ENCODE measurements at regions of chr4 and their contacts with region 1.

Region 1: GRCh38 chr4:163484906-163485305 is 9.6 kb upstream of the TMA16 start:
- DNase-seq: peak in 1 of 2 donors; percentile 80
- ATAC-seq: peak; percentile 55 to 65 (median 62)
- H3K4me3 ChIP-seq: no peak overlapping the region
- H3K4me3 Mint-ChIP-seq: no peak overlapping the region
- H3K27ac ChIP-seq: no peak overlapping the region
- H3K27ac Mint-ChIP-seq: no peak overlapping the region
- H3K4me1 ChIP-seq: no peaks in the 10 kb centered on the region
- H3K4me1 Mint-ChIP-seq: no peaks in the 10 kb centered on the region
- H3K27me3 ChIP-seq: no peaks in the 10 kb centered on the region
- H3K27me3 Mint-ChIP-seq: peaks cover 0 to 3% of the 10 kb centered on the region in 2 donors
- CTCF ChIP-seq: peak; percentile 70

Region 2: DNA sequence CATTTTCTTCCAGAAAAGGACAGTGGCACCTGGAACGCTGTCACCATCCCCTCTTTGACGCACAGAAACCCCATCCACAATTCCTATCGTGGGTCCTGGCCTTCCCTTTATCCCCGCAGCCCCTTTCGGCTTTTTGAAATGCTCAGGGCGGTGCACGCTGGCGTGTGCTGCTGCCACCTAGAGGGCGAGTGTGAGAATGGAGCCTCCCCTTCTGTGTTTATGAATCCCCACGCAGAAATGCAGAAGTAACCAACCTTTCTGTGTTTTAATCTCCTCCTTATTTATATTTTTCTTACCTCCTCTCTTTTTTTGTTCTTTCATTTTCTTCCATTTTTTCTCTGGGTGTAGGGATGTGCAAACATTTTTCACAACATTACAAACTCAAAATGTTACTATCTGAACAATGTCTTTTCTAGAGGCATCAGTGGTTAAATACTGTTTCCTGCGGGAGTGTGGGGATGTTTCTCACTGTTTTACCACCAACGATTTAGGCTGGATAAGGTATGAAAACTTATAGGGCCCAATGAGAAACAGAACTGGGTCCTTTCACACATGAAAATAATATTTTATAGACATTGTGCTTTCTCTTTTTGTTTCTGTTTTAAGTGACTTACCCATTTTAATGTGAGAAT is 59.6 kb after region 1 on chr4:
- intact Hi-C with region 1: loop called (anchors 1 kb)
- DNase-seq: peak; percentile 50 to 81
- ATAC-seq: peak; percentile 88 to 92 (median 90)
- H3K4me3 ChIP-seq: peak overlapping the region; percentile 14
- H3K4me3 Mint-ChIP-seq: no peak overlapping the region
- H3K27ac ChIP-seq: peak overlapping the region; percentile 67
- H3K27ac Mint-ChIP-seq: no peak overlapping the region
- H3K4me1 ChIP-seq: no peaks in the 10 kb centered on the region
- H3K4me1 Mint-ChIP-seq: peaks cover 0 to 5% of the 10 kb centered on the region in 2 donors
- H3K27me3 ChIP-seq: no peaks in the 10 kb centered on the region
- H3K27me3 Mint-ChIP-seq: no peaks in the 10 kb centered on the region
- CTCF ChIP-seq: peak; percentile 92

Region 3: DNA sequence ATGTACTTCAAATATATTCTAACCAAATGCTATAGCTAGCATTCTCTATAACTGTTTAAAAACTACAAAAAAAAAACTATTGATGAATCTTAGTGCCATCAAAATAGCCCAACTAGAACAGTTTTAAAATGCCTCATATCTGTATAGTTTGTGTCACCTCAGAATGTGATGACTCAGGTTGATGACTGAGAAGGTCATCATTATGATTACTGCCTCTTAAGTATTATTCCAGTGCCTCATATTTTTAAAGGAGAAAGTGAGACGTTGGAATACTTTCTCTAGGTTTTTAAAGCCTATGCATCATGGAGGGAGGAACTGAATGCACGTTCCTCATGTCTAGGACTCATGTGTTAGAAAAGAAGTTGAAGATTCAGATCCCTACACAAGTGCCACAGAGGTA is 97.8 kb after region 1 on chr4:
- intact Hi-C with region 1: no loop called
- DNase-seq: no peak
- ATAC-seq: no peak
- H3K4me3 ChIP-seq: no peak overlapping the region
- H3K4me3 Mint-ChIP-seq: no peak overlapping the region
- H3K27ac ChIP-seq: no peak overlapping the region
- H3K27ac Mint-ChIP-seq: no peak overlapping the region
- H3K4me1 ChIP-seq: no peaks in the 10 kb centered on the region
- H3K4me1 Mint-ChIP-seq: no peaks in the 10 kb centered on the region
- H3K27me3 ChIP-seq: no peaks in the 10 kb centered on the region
- H3K27me3 Mint-ChIP-seq: peaks cover 0 to 5% of the 10 kb centered on the region in 2 donors
- CTCF ChIP-seq: no peak

Region 4: DNA sequence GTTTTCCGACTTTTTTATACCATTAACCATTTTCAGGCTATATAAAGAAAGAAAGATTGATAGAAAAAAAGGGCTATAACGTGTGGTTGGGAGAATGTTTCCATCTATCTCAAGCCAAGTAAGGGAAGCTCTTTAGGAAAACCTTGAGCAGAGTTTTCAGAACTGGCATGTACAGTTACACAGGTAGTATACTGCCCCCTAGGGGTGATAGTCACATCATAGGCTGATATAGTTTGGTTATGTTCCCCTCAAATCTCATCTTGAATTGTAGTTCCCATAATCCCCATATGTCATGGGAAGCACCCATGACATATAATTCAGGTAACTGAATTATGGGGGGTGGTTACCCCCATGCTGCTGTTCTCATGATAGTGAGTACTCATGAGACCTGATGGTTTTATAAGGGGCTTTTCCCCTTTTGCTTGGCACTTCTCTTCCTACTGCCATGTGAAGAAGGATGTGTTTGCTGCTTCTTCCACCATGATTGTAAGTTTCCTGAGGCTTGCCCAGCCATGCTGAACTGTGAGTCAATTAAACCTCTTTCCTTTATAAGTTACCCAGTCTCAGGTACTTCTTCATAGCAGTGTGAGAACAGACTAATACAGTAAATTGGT is 196.4 kb after region 1 on chr4:
- intact Hi-C with region 1: loop called (anchors 1 kb)
- DNase-seq: peak in 1 of 2 donors; percentile 80
- ATAC-seq: peak in 2 of 3 donors; percentile 47 to 65
- H3K4me3 ChIP-seq: no peak overlapping the region
- H3K4me3 Mint-ChIP-seq: no peak overlapping the region
- H3K27ac ChIP-seq: no peak overlapping the region
- H3K27ac Mint-ChIP-seq: no peak overlapping the region
- H3K4me1 ChIP-seq: no peaks in the 10 kb centered on the region
- H3K4me1 Mint-ChIP-seq: no peaks in the 10 kb centered on the region
- H3K27me3 ChIP-seq: no peaks in the 10 kb centered on the region
- H3K27me3 Mint-ChIP-seq: peaks cover 0 to 7% of the 10 kb centered on the region in 2 donors
- CTCF ChIP-seq: peak; percentile 44

Region 5: GRCh38 chr4:163701916-163702315 is 217.0 kb after region 1 on chr4:
- intact Hi-C with region 1: no loop called
- DNase-seq: no peak
- ATAC-seq: no peak
- H3K4me3 ChIP-seq: no peak overlapping the region
- H3K4me3 Mint-ChIP-seq: no peak overlapping the region
- H3K27ac ChIP-seq: no peak overlapping the region
- H3K27ac Mint-ChIP-seq: no peak overlapping the region
- H3K4me1 ChIP-seq: no peaks in the 10 kb centered on the region
- H3K4me1 Mint-ChIP-seq: no peaks in the 10 kb centered on the region
- H3K27me3 ChIP-seq: no peaks in the 10 kb centered on the region
- H3K27me3 Mint-ChIP-seq: no peaks in the 10 kb centered on the region
- CTCF ChIP-seq: no peak

Region 6: DNA sequence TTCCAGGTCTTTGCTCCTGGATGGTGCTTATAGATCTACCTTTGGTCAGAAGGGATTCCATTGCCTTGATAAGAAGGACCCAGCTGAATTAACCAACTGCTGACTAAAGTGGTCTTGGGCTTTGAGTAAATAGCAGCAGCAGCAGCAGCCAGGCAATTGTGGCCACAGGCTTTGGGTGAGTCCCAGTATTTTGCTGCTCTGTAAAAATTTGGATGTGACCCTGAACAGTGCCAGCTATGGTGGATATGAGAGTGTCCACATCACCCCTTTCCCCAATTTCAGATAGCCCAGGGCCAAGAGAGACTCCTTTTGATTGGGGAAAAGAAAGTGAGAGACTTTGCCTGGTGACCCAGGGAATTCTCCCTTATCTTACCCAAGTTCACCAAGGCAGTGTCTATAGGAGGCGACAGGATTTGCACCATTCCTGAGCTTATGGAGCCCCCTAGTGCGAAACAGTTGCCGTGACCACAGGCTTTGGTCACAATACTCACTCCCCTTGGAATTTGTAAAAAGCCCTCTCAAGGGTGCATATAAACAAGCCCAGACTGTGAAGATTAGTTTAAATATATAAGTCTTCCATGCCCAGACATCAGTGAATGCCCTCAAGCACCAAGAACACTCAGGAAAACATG is 527.6 kb after region 1 on chr4:
- intact Hi-C with region 1: loop called (anchors 10 kb)
- DNase-seq: peak in 1 of 2 donors; percentile 66
- ATAC-seq: peak in 2 of 3 donors; percentile 31 to 49
- H3K4me3 ChIP-seq: no peak overlapping the region
- H3K4me3 Mint-ChIP-seq: no peak overlapping the region
- H3K27ac ChIP-seq: no peak overlapping the region
- H3K27ac Mint-ChIP-seq: no peak overlapping the region
- H3K4me1 ChIP-seq: no peaks in the 10 kb centered on the region
- H3K4me1 Mint-ChIP-seq: no peaks in the 10 kb centered on the region
- H3K27me3 ChIP-seq: no peaks in the 10 kb centered on the region
- H3K27me3 Mint-ChIP-seq: no peaks in the 10 kb centered on the region
- CTCF ChIP-seq: no peak

Region 7: GRCh38 chr4:164731827-164732474 is 1247.0 kb after region 1 on chr4:
- intact Hi-C with region 1: loop called (anchors 5 kb)
- DNase-seq: peak; percentile 43 to 68
- ATAC-seq: peak; percentile 65 to 75 (median 73)
- H3K4me3 ChIP-seq: no peak overlapping the region
- H3K4me3 Mint-ChIP-seq: no peak overlapping the region
- H3K27ac ChIP-seq: no peak overlapping the region
- H3K27ac Mint-ChIP-seq: no peak overlapping the region
- H3K4me1 ChIP-seq: no peaks in the 10 kb centered on the region
- H3K4me1 Mint-ChIP-seq: peaks cover 8 to 40% of the 10 kb centered on the region in 2 donors
- H3K27me3 ChIP-seq: no peaks in the 10 kb centered on the region
- H3K27me3 Mint-ChIP-seq: peaks cover 0 to 5% of the 10 kb centered on the region in 2 donors
- CTCF ChIP-seq: peak; percentile 95

Measured in natural killer cell (primary cell).